ENCODE measurements at regions of chrX and their contacts with region 1.

Region 1: DNA sequence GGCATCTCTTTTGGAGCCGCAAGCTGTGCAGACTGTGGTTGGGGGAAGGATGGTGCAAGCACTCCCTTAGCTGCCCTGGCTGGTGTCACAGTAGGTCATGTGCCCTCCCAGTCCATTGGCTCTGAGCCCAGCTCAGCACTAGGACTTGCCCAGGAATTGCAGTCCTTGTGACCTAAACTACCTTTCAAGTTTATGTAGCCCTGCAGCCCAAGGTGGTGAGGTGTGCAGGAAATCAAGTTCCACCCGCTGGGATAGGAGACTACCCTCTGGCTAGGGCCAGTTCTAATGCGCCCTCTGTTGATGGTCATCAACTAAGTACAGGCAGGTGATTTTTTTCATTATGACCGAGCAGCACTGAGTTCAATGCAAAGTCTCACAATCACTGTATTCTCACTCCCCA is 335.2 kb downstream of the UBE2NL start:
- DNase-seq: no peak
- H3K4me3 ChIP-seq: no peak overlapping the region
- H3K27ac ChIP-seq: no peak overlapping the region
- H3K4me1 ChIP-seq: no peaks in the 10 kb centered on the region
- H3K27me3 ChIP-seq: no peaks in the 10 kb centered on the region
- CTCF ChIP-seq: no peak
- EP300 ChIP-seq: no peak
- POLR2A ChIP-seq: no peak

Region 2: DNA sequence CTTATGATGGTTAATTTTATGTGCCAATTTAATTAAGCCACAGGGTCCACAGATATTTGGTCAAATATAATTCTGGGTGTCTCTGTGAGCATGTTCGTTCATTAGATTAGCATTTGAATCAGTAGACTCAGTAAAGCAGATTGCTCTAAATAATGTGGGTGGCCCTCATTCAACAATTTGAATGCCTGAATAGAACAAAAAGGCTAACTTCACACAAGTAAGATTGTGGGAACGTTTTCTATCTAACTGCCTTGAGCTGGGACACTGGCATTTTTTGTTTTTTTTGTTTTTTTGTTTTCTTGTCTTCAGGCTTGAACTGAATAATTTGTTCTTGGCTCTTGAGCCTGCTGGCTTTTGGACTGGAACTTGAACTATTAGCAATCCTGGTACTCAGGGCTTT is 1485.7 kb before region 1 on chrX:
- intact Hi-C with region 1: no loop called
- DNase-seq: no peak
- H3K4me3 ChIP-seq: no peak overlapping the region
- H3K27ac ChIP-seq: no peak overlapping the region
- H3K4me1 ChIP-seq: no peaks in the 10 kb centered on the region
- H3K27me3 ChIP-seq: no peaks in the 10 kb centered on the region
- CTCF ChIP-seq: no peak
- EP300 ChIP-seq: no peak
- POLR2A ChIP-seq: no peak

Region 3: DNA sequence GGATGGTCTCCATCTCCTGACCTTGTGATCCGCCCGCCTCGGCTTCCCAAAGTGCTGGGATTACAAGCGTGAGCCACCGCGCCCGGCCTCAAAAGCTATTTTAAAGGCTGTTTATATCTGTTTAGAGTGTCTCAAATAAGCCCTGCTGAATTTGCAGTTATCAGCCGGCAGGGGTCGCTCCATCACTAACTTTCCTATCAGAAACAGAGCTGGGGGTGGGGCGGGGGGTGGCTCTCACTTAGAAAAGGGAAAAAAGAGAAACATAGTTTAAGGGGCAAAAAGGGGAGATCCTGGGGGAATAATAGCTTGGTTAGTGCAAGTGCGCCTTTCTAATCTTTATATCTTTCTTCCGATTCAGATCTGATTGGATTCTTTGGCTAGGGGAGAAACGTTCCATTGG is 115.5 kb after region 1 on chrX:
- intact Hi-C with region 1: loop called in 1 of 4 experiments (anchors 10 kb)
- DNase-seq: no peak
- H3K4me3 ChIP-seq: no peak overlapping the region
- H3K27ac ChIP-seq: no peak overlapping the region
- H3K4me1 ChIP-seq: no peaks in the 10 kb centered on the region
- H3K27me3 ChIP-seq: no peaks in the 10 kb centered on the region
- CTCF ChIP-seq: no peak
- EP300 ChIP-seq: no peak
- POLR2A ChIP-seq: no peak